Gastrocnemius medialis (tissue), 4 donors: ENCODE measurements at regions of chr17 and their contacts with region 1.

Region 1: GRCh38 chr17:28967221-28968140 is 16.2 kb upstream of the PHF12 start:
- DNase-seq: no peak
- ATAC-seq: no peak
- H3K4me3 ChIP-seq: no peak overlapping the region
- H3K27ac ChIP-seq: no peak overlapping the region
- H3K4me1 ChIP-seq: no peaks in the 10 kb centered on the region
- H3K27me3 ChIP-seq: peaks cover 0 to 10% (median 0%) of the 10 kb centered on the region in 3 donors
- CTCF ChIP-seq: no peak
- POLR2A ChIP-seq: no peak

Region 2: DNA sequence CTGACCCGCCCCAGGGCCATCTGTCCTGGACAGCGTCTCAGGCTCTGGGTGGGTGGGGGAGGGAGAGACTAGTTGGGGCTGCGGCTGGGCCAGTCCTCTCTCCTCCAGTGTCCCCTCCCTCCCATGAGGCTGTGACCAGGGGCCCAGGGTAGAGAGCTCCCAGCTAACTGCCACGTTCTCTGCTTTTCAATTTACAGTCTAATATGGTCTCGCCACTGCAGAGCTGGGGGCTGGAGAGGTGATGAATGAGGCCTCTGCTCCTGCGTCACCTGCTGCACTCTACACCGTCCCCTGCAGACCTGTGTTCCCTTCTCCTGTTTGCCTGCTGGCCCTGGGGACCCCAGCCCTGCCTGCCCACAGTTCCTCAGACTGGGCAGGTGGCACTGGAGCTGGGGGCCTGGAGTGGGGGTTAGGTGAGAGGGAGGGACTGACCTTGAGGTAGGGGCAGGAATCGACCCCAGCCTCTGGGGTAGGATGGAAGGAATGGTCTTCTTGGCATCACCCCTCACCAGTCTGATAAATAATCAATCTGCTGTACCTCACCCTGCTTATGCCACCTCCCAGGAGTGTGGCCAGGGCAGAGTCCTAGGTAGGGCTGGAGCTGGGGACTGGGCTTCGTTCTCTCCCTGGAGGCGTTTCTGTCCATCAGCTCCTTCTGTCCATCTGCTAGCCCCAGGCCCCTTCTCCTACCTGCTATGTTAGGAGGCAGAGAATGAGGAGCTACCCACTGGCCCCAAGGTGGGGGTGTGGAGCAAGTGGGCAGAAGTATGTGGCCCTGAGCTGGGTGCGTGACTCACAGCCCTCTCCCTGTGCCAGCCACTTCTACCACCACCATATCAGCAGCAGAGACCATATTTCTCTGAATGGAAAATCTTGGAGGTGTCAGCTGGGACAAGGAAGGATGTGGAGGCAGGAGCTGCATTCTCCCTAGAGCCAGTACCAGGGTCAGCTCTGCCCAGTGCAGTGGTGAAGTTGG is 25.4 kb after region 1 on chr17:
- in situ Hi-C with region 1: no loop called
- intact Hi-C with region 1: no loop called
- DNase-seq: no peak
- ATAC-seq: no peak
- H3K4me3 ChIP-seq: no peak overlapping the region
- H3K27ac ChIP-seq: no peak overlapping the region
- H3K4me1 ChIP-seq: peaks cover 0 to 7% of the 10 kb centered on the region in 2 donors
- H3K27me3 ChIP-seq: no peaks in the 10 kb centered on the region
- CTCF ChIP-seq: no peak
- POLR2A ChIP-seq: no peak

Region 3: DNA sequence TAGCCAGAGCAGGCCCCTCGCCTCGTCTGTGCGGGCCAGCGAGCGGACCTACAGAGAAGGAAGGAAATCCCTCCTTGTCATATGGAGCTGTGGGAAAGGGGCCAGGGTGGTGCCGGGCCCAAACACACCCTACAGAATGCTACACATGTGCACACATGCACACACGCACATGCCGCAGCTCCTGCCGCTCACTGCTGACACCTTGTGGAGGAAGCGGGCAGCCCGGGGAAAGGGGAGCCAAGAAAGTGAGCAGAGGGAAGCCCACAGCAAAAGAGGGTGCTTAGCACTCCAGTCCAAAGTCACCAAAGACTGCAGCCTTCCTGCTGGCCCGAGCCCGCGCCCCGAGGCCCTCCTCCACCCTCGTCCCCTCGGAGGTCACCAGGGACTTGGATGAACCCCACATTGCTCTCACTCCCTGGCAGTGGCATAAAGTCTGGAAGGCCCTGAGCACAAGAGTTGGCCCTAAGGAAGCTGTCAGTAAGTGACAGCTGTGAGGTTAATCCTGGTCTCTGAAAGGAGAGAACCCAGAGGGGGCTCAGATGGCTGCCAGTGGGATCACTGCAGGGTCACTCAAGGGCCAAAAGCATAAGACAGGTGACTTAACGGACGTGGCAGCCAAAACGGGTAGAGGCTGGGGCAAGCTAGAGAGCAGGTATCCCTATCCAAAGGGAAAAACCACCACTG is 144.5 kb after region 1 on chr17:
- in situ Hi-C with region 1: loop called (anchors 5 to 10 kb)
- intact Hi-C with region 1: loop called (anchors 1 kb)
- DNase-seq: peak; percentile 63 to 95
- ATAC-seq: peak; percentile 77 to 80
- H3K4me3 ChIP-seq: no peak overlapping the region
- H3K27ac ChIP-seq: peak overlapping the region; percentile 78 to 98 (median 84)
- H3K4me1 ChIP-seq: peaks cover 74% of the 10 kb centered on the region in 2 donors
- H3K27me3 ChIP-seq: no peaks in the 10 kb centered on the region
- CTCF ChIP-seq: peak; percentile 83 to 93 (median 91)
- POLR2A ChIP-seq: no peak

Region 4: GRCh38 chr17:29116804-29117772 is 149.6 kb after region 1 on chr17:
- in situ Hi-C with region 1: loop called in 2 of 4 experiments (anchors 5 to 10 kb)
- intact Hi-C with region 1: loop called (anchors 1 kb)
- DNase-seq: peak; percentile 49 to 83
- ATAC-seq: peak; percentile 21 to 31
- H3K4me3 ChIP-seq: no peak overlapping the region
- H3K27ac ChIP-seq: peak overlapping the region in 3 of 4 donors; percentile 51 to 98 (median 89)
- H3K4me1 ChIP-seq: peaks cover 43 to 46% of the 10 kb centered on the region in 2 donors
- H3K27me3 ChIP-seq: no peaks in the 10 kb centered on the region
- CTCF ChIP-seq: peak; percentile 78 to 94 (median 91)
- POLR2A ChIP-seq: no peak